ENCODE measurements at regions of chr15 and their contacts with region 1.

Region 1: DNA sequence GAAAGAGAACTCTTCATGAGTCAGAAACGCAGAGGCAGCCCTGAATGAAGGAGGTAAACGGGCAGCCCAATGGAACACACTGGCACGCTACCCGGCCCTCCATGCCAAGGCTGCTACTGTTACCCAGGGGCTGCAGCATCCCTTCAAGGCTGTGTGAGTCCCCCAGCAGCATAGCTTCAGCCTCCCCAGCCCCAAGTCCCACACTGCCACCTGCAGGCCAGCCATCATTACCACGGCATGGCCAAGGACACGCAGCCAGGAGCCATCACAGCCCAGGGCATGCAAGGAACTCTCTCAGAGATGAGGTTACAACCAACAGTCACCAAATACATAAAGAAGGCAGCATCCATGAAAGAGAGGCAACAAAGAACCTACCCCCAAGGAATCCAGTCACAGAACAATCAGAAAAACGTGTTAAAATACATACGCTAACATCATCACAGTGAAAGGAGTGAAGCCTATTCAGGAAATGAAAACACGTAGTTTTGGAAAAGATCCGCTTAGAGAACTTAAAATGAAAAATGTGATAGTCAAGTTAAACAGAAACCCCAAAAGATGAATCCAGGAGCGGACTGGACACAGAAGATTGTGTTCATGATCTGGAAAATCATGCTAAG is 22.4 kb downstream of the PLA2G4F start:
- DNase-seq: peak; percentile 17 to 86
- H3K4me3 ChIP-seq: no peak overlapping the region
- CTCF ChIP-seq: peak in 1 of 3 donors; percentile 29
- POLR2A ChIP-seq: no peak

Region 2: DNA sequence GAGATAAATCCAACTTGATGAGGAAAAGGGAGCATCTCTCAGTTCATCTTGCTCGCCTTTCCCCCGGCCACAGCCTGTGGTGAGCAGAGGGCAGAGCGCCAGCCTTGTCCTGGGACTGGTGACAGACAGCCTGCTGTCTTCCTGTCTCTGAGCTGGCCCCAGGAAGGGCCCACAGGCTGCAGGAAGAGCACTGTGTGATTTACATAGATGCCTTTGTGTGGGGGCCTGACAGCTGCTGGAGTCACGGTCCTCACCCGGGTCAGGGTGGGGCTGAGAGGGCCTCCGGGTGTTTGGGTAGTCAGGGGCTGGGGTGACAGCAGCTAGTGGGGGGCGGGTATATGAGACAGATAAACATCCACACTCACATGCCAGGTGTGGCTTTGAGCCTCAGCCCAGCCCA is 69.0 kb before region 1 on chr15:
- intact Hi-C with region 1: loop called (anchors 2 kb)
- DNase-seq: peak in 1 of 2 donors; percentile 86
- H3K4me3 ChIP-seq: no peak overlapping the region
- CTCF ChIP-seq: no peak
- POLR2A ChIP-seq: no peak